ENCODE measurements at regions of chr1 and their contacts with region 1.

Region 1: DNA sequence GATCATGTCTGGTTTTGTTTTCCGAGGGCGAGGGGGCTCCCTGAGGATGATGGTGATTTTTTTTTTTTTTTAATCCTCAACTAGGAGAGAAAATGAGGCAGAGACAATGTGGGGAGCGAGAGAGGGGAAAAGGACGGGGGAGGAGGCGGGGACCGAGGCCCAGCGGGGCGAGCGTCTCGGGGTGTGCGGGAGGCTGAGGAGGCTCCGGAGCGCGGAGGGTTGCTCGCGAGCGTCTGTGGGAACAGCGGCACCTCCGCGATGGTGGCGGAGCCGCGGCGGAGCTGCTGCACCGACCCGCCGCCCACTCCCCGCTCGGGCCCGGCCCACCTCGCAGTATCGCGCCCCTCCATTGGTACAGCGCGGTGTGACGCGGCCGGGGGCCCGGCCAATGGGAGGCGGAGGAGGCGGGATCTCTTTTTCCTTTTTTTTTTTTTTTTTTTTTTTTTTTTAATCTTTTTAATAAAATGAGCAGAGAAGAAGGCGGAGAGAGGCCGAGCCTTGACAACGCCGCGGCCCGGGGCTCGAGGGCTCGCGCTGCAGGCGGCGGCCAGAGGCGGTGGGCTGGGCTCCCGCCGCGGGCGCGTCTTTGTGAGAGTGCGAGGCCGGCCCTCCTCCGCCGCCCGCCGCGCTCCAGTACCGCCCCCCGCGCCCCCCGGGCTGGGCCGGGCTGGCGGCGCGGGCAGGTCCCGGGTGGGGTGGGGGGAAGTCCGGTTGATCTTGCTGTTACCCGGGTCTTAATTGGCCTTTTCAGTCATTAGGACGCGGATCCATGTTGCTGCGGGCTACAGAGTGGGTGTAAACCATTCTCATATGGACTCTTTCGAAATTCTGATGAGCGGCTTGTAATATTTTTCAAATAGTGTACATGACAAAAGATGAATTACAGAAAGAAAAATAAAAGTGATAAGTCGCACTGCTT is at the start of gene RERE:
- DNase-seq: peak; percentile 97
- H3K4me3 ChIP-seq: peak within 1 kb of the TSS; percentile 68 to 89 (median 78)
- H3K27ac ChIP-seq: peak within 1 kb of the TSS; percentile 95 to 99 (median 96)
- H3K4me1 ChIP-seq: peaks cover 0 to 51% (median 42%) of the 10 kb centered on the region in 4 donors
- H3K27me3 ChIP-seq: no peaks in the 10 kb centered on the region
- CTCF ChIP-seq: no peak
- EP300 ChIP-seq: no peak
- POLR2A ChIP-seq: peak; percentile 95 to 96
- total RNA-seq, gene RERE: 90.6 to 148 (median 124) TPM

Region 2: GRCh38 chr1:8718850-8719361 is 98.8 kb before region 1 on chr1:
- intact Hi-C with region 1: loop called (anchors 5 kb)
- DNase-seq: no peak
- H3K4me3 ChIP-seq: no peak overlapping the region
- H3K27ac ChIP-seq: peak overlapping the region in 1 of 4 donors; percentile 41
- H3K4me1 ChIP-seq: peaks cover 0 to 35% (median 18%) of the 10 kb centered on the region in 4 donors
- H3K27me3 ChIP-seq: no peaks in the 10 kb centered on the region
- CTCF ChIP-seq: no peak
- EP300 ChIP-seq: no peak
- POLR2A ChIP-seq: no peak

Region 3: GRCh38 chr1:8848663-8849386 is 31.2 kb after region 1 on chr1:
- intact Hi-C with region 1: no loop called
- DNase-seq: peak; percentile 97
- H3K4me3 ChIP-seq: no peak overlapping the region
- H3K27ac ChIP-seq: peak overlapping the region; percentile 54 to 75 (median 71)
- H3K4me1 ChIP-seq: peaks cover 0 to 21% (median 6%) of the 10 kb centered on the region in 4 donors
- H3K27me3 ChIP-seq: no peaks in the 10 kb centered on the region
- CTCF ChIP-seq: peak; percentile 57 to 92 (median 88)
- EP300 ChIP-seq: peak in 2 of 4 donors; percentile 14 to 51
- POLR2A ChIP-seq: no peak

Region 4: GRCh38 chr1:8866792-8867415 is 49.2 kb after region 1 on chr1:
- intact Hi-C with region 1: no loop called
- DNase-seq: no peak
- H3K4me3 ChIP-seq: no peak overlapping the region
- H3K27ac ChIP-seq: no peak overlapping the region
- H3K4me1 ChIP-seq: peaks cover 0 to 4% (median 2%) of the 10 kb centered on the region in 4 donors
- H3K27me3 ChIP-seq: no peaks in the 10 kb centered on the region
- CTCF ChIP-seq: no peak
- EP300 ChIP-seq: no peak
- POLR2A ChIP-seq: no peak

Region 5: GRCh38 chr1:8878448-8879347 is 61.0 kb after region 1 on chr1 and contains the start of gene ENO1:
- intact Hi-C with region 1: loop called (anchors 2 kb)
- DNase-seq: peak; percentile 99
- H3K4me3 ChIP-seq: peak within 1 kb of the TSS; percentile 65 to 95 (median 83)
- H3K27ac ChIP-seq: peak within 1 kb of the TSS; percentile 94 to 100 (median 98)
- H3K4me1 ChIP-seq: peaks cover 0 to 57% (median 54%) of the 10 kb centered on the region in 4 donors
- H3K27me3 ChIP-seq: no peaks in the 10 kb centered on the region
- CTCF ChIP-seq: no peak
- EP300 ChIP-seq: peak in 1 of 4 donors; percentile 22
- POLR2A ChIP-seq: peak; percentile 96
- total RNA-seq, gene ENO1: 265 to 324 (median 300) TPM

Measured in sigmoid colon (tissue), 7 donors.